PC-9 (cell line): ENCODE measurements at regions of chr2 and their contacts with region 1.

Region 1: DNA sequence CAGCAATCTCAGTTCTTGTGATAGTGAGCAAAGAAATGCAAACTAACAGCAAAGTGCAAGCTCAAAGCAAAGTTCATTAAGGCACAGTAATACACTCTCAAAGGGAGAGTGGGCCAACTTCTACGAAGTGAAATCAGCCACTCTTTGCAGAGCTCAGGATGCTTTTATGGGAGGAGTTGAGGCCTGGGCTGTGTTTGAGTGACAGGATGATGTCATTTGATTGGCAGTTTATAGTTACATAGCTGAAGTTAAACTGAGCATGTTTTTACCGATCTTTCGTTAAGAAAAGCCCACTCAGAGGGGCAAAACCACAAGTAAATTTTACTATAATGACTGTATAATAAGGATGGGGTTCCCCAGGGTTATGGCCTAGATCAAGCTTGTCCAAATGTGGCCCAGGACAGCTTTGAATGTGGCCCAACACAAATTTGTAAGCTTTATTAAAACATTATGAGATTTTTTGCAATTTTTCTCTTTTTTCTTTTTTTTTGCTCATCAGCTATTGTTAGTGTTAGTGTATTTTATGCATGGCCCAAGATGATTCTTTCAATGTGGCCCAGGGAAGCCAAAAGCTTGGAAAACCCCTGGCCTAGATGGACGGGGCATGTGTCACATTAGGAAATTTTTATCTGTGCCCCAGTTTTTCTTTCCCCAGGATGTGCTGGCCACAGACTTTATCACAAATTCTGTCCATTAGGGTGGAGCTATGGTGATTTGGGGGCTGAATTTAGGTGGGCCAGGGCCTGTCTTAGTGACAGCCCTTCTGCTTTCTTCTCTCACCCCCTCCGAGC is 8.3 kb upstream of the DNAH7 start:
- DNase-seq: no peak
- H3K4me3 ChIP-seq: no peak overlapping the region
- H3K27ac ChIP-seq: no peak overlapping the region
- H3K4me1 ChIP-seq: no peaks in the 10 kb centered on the region
- H3K27me3 ChIP-seq: no peaks in the 10 kb centered on the region
- CTCF ChIP-seq: no peak

Region 2: GRCh38 chr2:195505701-195506100 is 571.3 kb before region 1 on chr2:
- CTCF ChIA-PET with region 1: no interaction called
- POLR2A ChIA-PET with region 1: no interaction called
- intact Hi-C with region 1: no loop called
- DNase-seq: no peak
- H3K4me3 ChIP-seq: no peak overlapping the region
- H3K27ac ChIP-seq: no peak overlapping the region
- H3K4me1 ChIP-seq: no peaks in the 10 kb centered on the region
- H3K27me3 ChIP-seq: no peaks in the 10 kb centered on the region
- CTCF ChIP-seq: no peak

Region 3: DNA sequence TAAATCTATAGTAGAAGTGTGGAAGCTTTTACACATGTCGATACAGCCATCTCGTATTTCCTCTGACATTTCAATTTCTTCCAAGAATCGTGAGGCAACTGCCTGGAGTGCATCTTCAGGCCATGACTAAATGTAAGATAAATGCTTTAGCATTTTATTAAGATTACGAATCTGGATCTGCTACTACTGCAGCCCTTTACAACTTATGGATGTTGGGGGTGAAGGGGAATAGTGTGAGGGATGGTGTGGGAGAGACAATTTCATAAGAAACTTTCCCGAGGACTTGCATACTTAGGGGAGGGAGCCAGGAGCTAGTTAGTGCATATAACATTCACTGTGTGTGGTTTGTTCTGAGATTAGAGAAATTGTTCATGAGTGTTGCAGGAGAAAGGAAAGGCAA is 215.2 kb before region 1 on chr2:
- CTCF ChIA-PET with region 1: no interaction called
- POLR2A ChIA-PET with region 1: no interaction called
- intact Hi-C with region 1: no loop called
- DNase-seq: no peak
- H3K4me3 ChIP-seq: no peak overlapping the region
- H3K27ac ChIP-seq: no peak overlapping the region
- H3K4me1 ChIP-seq: no peaks in the 10 kb centered on the region
- H3K27me3 ChIP-seq: no peaks in the 10 kb centered on the region
- CTCF ChIP-seq: no peak

Region 4: DNA sequence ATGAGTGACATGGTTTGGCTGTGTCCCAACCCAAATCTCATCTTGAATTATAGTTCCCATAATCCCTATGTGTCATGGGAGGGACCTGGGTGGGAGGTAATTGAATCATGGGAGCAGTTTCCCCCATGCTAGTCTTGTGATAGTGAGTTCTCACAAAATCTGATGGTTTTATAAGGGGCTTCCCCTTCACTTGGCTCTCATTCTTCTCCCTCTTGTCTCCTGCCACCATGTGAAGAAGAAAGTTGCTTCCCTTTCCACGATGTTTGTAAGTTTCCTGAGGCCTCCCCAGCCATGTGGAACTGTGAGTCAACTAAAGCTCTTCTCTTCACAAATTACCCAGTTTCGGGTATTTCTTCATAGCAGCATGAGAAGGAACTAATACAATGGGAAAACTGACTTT is 22.3 kb before region 1 on chr2:
- CTCF ChIA-PET with region 1: no interaction called
- POLR2A ChIA-PET with region 1: no interaction called
- intact Hi-C with region 1: no loop called
- DNase-seq: no peak
- H3K4me3 ChIP-seq: no peak overlapping the region
- H3K27ac ChIP-seq: no peak overlapping the region
- H3K4me1 ChIP-seq: no peaks in the 10 kb centered on the region
- H3K27me3 ChIP-seq: no peaks in the 10 kb centered on the region
- CTCF ChIP-seq: no peak

Region 5: DNA sequence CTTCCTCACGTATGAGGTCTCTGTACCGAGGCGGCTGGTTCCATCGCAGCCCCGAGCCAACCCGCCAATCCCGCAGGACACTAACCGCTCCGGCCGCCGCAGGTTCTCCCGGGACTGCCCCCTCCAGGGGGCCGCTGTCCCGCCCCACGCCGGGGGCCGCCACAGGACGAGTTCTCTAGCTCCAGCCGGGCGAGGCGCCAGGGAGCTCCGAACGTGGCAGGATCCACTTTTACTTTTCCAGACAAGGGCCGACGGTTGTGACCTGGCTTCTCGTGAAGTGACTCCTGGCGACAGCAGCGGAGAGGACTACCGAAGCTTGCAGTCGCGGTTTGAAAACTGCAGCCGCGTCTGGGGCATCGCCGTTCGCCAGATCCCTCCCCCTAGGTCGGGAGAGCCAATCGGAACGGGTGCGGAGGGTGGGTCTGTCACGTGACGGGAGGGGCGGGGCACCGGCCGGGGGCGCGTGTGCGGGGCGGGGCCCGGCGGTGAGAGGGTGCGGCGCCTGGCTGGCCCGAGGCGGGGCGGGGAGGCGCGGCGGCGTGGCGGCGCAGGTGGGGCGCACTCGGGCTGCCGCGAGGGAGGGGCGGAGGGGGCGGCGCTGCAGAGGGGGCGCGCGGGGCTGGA is 94.4 kb after region 1 on chr2 and contains the start of gene STK17B:
- CTCF ChIA-PET with region 1: no interaction called
- POLR2A ChIA-PET with region 1: no interaction called
- intact Hi-C with region 1: loop called (anchors 2 kb)
- DNase-seq: peak; percentile 79 to 85
- H3K4me3 ChIP-seq: peak within 1 kb of the TSS; percentile 95
- H3K27ac ChIP-seq: peak within 1 kb of the TSS; percentile 77
- H3K4me1 ChIP-seq: peaks cover 40% of the 10 kb centered on the region
- H3K27me3 ChIP-seq: no peaks in the 10 kb centered on the region
- CTCF ChIP-seq: no peak
- total RNA-seq, gene STK17B: 10.8 and 14.9 TPM in 2 replicates

Region 6: DNA sequence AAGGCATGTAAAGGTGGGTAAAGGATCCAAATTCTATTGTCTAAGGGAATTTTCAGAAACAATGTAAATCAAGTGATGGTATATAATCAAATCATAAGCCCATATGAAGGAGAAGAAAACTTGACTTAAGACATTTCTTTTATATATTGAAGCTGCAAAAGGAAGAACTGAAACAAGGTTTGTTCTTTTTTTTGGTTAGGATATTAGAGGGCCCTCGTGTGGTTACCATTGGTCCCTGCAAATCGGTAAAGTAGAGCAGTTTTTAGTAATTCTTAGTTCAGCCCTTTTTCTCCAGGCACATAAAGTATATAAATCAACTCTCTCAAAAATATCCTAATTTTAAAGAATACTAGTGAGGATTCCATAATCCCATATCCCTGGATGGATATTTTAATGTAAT is 200.0 kb after region 1 on chr2:
- CTCF ChIA-PET with region 1: no interaction called
- POLR2A ChIA-PET with region 1: no interaction called
- intact Hi-C with region 1: loop called (anchors 1 kb)
- DNase-seq: no peak
- H3K4me3 ChIP-seq: no peak overlapping the region
- H3K27ac ChIP-seq: no peak overlapping the region
- H3K4me1 ChIP-seq: peaks cover 9% of the 10 kb centered on the region; the same call in 1 of the 2 replicates
- H3K27me3 ChIP-seq: no peaks in the 10 kb centered on the region
- CTCF ChIP-seq: peak; percentile 68

Region 7: GRCh38 chr2:196337208-196337953 is 260.4 kb after region 1 on chr2:
- CTCF ChIA-PET with region 1: interaction called, 6 read pairs
- POLR2A ChIA-PET with region 1: no interaction called
- intact Hi-C with region 1: loop called (anchors 1 kb)
- DNase-seq: no peak
- H3K4me3 ChIP-seq: no peak overlapping the region
- H3K27ac ChIP-seq: no peak overlapping the region
- H3K4me1 ChIP-seq: peaks cover 21% of the 10 kb centered on the region
- H3K27me3 ChIP-seq: no peaks in the 10 kb centered on the region
- CTCF ChIP-seq: peak; percentile 70

Region 8: DNA sequence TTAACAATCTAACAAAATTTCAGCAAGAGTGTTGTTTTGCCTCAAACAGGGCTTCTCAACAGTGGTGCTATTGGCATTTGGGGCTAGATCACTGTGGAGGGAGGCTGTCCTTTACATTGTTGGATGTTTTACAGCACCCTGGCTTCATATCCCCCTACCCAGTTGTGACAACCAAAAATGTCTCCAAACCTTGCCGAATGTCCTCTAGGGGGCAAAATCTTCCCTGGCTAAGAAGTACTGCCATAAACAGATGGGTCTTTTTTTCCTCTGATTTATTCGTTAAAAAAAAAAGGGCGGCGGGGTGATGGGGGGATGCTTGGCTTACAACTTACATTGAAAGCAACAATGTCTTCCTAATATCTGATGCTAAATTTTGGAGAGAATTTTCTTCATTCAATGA is 355.0 kb after region 1 on chr2:
- CTCF ChIA-PET with region 1: no interaction called
- POLR2A ChIA-PET with region 1: no interaction called
- intact Hi-C with region 1: no loop called
- DNase-seq: no peak
- H3K4me3 ChIP-seq: no peak overlapping the region
- H3K27ac ChIP-seq: no peak overlapping the region
- H3K4me1 ChIP-seq: no peaks in the 10 kb centered on the region
- H3K27me3 ChIP-seq: no peaks in the 10 kb centered on the region
- CTCF ChIP-seq: 0 out of 2 replicates have a peak, but pooled peaks have one; percentile 40

Region 9: GRCh38 chr2:196453613-196454047 is 376.7 kb after region 1 on chr2:
- CTCF ChIA-PET with region 1: no interaction called
- POLR2A ChIA-PET with region 1: no interaction called
- intact Hi-C with region 1: loop called (anchors 1 kb)
- DNase-seq: peak in 1 of 2 experiments; percentile 14
- H3K4me3 ChIP-seq: no peak overlapping the region
- H3K27ac ChIP-seq: no peak overlapping the region
- H3K4me1 ChIP-seq: no peaks in the 10 kb centered on the region
- H3K27me3 ChIP-seq: no peaks in the 10 kb centered on the region
- CTCF ChIP-seq: peak; percentile 68

Region 10: DNA sequence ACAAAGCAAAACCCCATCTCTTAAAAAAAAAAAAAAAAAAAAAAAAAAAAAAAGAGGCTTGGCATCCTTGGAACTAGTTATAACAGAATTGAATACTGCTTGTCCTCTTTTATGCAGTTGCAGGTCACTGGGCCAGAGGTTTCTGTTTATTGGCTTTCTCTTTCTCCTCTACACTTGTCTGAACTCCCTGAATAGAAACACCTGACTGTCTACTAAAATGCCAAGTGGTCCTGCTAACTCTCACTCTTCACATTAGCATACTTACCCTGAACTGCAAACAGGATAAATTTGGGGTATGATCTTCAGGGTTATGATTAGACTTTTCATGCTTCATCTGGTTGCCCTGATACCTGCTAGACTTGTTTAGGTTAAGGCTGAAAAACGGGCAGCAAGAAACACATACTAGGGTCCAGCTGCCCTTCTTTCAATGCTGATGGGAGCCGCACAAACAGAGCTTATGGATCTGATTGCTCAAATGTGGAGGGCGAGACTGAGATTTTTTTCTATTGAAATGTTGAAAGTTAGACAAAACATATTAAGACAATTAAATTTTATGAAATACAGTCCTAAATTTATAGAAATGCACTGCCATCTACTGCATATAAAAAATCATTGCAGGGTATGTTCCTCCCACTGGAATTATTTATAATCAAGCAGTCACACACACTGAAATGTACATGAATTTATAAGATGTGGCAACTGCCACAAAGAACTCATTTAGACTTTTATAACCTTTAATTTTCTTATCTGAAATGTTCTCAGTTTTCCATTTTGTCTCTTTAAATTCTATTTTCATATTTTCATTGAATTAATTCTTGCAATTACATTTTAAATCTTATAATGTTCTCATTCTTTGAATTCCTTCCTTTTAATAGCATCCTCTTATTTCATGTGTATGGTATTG is 681.8 kb after region 1 on chr2:
- CTCF ChIA-PET with region 1: no interaction called
- POLR2A ChIA-PET with region 1: no interaction called
- intact Hi-C with region 1: loop called (anchors 5 kb)
- DNase-seq: no peak
- H3K4me3 ChIP-seq: no peak overlapping the region
- H3K27ac ChIP-seq: no peak overlapping the region
- H3K4me1 ChIP-seq: no peaks in the 10 kb centered on the region
- H3K27me3 ChIP-seq: no peaks in the 10 kb centered on the region
- CTCF ChIP-seq: peak; percentile 54